Common myeloid progenitor, CD34-positive (primary cell): ENCODE measurements at regions of chr5 and their contacts with region 1.

Region 1: GRCh38 chr5:141618804-141619554 is at the start of gene DIAPH1:
- DNase-seq: peak; percentile 97 to 99 (median 99)
- H3K4me3 ChIP-seq: peak within 1 kb of the TSS; percentile 72 to 95 (median 86)
- H3K27ac ChIP-seq: peak within 1 kb of the TSS; percentile 69 to 90
- H3K4me1 ChIP-seq: peaks cover 22 to 44% (median 28%) of the 10 kb centered on the region in 4 experiments
- H3K27me3 ChIP-seq: no peaks in the 10 kb centered on the region

Region 2: DNA sequence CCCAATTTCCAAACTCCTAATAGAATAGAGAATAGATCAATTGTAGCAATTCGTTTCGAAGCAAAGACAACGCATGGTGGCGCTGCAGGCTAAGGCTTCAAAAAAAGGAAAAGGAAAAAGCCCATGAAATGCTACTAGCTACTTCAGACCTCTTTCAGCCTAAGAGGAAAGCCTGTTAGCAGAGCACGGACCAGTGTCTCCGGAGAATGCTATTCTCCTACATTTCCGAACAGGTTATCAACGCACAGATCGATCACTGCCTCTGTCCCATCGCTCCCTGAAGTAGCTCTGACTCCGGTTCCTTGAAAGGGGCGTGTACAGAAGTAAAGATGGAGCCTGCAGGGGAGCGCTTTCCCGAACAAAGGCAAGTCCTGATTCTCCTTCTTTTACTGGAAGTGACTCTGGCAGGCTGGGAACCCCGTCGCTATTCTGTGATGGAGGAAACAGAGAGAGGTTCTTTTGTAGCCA is 373.7 kb before region 1 on chr5 and contains the start of gene PCDHB15:
- CTCF ChIA-PET with region 1: no interaction called
- POLR2A ChIA-PET with region 1: no interaction called
- DNase-seq: peak; percentile 4 to 13 (median 11)
- H3K4me3 ChIP-seq: peak within 1 kb of the TSS in 5 of 7 experiments; percentile 1 to 39 (median 20)
- H3K27ac ChIP-seq: no peak within 1 kb of the TSS
- H3K4me1 ChIP-seq: no peaks in the 10 kb centered on the region
- H3K27me3 ChIP-seq: peaks cover 0 to 45% (median 13%) of the 10 kb centered on the region in 5 experiments

Region 3: GRCh38 chr5:141590127-141590526 is 28.9 kb before region 1 on chr5:
- CTCF ChIA-PET with region 1: interaction called, 281 read pairs
- POLR2A ChIA-PET with region 1: interaction called, 11 read pairs
- DNase-seq: peak in 2 of 3 donors; percentile 53 to 61
- H3K4me3 ChIP-seq: no peak overlapping the region
- H3K27ac ChIP-seq: no peak overlapping the region
- H3K4me1 ChIP-seq: peaks cover 0 to 18% (median 10%) of the 10 kb centered on the region in 4 experiments
- H3K27me3 ChIP-seq: no peaks in the 10 kb centered on the region

Region 4: GRCh38 chr5:141598391-141599350 is 20.3 kb before region 1 on chr5:
- CTCF ChIA-PET with region 1: interaction called, 281 read pairs
- POLR2A ChIA-PET with region 1: interaction called, 4 read pairs
- DNase-seq: peak in 1 of 3 donors; percentile 24
- H3K4me3 ChIP-seq: no peak overlapping the region
- H3K27ac ChIP-seq: no peak overlapping the region
- H3K4me1 ChIP-seq: peaks cover under 1 to 19% (median 3%) of the 10 kb centered on the region in 4 experiments
- H3K27me3 ChIP-seq: no peaks in the 10 kb centered on the region

Region 5: DNA sequence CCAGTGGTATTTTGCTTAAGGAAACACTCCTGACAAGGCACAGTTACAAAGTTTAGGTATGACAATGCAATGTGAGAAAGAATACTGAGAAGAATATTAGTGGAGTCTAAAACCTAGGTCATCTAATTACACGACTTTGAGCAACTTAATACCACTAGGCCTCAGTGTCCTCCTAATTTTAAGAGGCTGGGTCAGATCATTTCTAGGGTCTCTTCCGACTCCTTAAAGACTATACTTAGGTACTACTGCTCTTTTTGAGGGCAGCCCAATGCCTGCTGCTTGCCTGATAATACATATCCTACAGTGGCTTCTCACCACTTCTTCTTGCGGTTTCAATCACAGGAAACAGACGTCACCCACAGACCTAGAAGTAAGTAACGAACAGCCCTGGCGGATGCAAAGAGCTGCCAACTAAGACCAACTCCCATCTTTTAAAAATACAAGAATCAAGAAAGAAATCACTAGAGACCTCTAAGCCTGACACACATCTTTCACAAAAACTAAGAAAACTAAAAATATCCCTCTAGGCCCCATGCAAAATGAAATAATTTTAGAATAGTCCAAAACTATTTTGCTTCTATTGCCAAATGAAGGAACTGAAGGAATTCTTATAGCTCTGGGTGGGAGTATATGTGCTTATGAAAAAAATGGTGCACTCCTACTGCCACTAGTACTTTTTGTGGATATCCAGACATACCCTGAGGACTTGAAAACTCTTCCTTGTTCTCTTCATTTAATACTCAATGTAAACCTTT is 13.3 kb before region 1 on chr5:
- CTCF ChIA-PET with region 1: interaction called, 88 read pairs
- POLR2A ChIA-PET with region 1: interaction called, 8 read pairs
- DNase-seq: peak; percentile 97 to 100 (median 99)
- H3K4me3 ChIP-seq: peak overlapping the region in 4 of 7 experiments; percentile 33 to 56 (median 46)
- H3K27ac ChIP-seq: peak overlapping the region in 1 of 2 experiments; percentile 74
- H3K4me1 ChIP-seq: peaks cover 32 to 63% (median 45%) of the 10 kb centered on the region in 4 experiments
- H3K27me3 ChIP-seq: no peaks in the 10 kb centered on the region

Region 6: GRCh38 chr5:141636413-141637122 is 17.6 kb after region 1 on chr5 and contains the starts of genes HDAC3 and RELL2:
- CTCF ChIA-PET with region 1: interaction called, 101 read pairs
- POLR2A ChIA-PET with region 1: interaction called, 3 read pairs
- DNase-seq: peak; percentile 82 to 89 (median 88)
- H3K4me3 ChIP-seq: peak within 1 kb of the TSS; percentile 79 to 99 (median 92)
- H3K27ac ChIP-seq: peak within 1 kb of the TSS; percentile 60 to 88
- H3K4me1 ChIP-seq: peaks cover 4 to 40% (median 30%) of the 10 kb centered on the region in 4 experiments
- H3K27me3 ChIP-seq: no peaks in the 10 kb centered on the region